Psoas muscle (tissue), 8 donors: ENCODE measurements at regions of chr16 and their contacts with region 1.

Region 1: DNA sequence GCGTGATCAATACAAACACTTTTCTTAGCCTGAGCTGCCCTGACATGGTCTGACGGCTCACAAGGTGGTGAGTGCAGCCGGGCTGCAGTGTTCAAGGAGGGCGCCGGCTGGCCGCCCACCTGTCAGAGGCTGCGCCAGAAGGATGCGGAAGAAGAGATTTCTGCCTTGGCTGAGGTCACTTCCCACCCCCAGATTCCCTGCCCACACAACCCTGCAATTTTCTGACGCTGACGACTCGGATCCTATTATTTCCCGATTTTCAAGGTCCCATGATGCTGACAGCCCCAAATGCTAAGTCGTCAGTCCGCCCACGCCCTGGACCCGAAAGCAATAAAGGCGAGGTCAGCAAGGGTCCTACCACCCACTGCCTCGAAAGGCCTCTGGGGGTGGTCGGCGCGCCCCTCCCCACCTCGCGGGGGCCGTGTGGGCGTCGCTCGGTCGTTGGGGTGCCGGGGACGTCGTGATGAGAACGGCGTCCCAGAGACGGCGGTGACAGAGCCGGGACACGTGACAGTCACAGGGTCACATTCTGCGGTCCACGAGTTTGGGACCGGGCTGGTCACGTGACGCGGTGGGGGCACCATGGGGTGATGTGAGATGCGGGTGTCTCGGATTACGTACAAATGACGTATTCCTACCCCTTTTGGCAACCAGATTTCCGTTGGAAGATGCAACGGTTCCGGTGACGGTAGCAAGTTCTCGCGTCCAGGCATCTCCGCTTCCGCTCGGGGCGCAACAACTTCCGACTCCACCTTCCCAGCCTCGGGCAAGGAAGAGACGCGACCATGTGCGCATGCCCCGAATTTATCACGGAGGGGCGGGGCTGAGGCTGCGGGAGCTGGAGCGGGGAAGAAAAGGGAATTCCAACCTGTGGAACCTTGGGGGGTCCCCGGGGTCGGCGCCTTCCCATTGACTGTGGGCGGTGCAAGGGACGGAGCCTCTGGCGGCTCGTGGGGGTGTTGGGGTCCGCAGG is at the start of gene STX4:
- DNase-seq: peak; percentile 98 to 99
- ATAC-seq: peak; percentile 91 to 96 (median 94)
- H3K4me3 ChIP-seq: peak within 1 kb of the TSS; percentile 85
- H3K27ac ChIP-seq: peak within 1 kb of the TSS; percentile 96
- H3K4me1 ChIP-seq: peaks cover 10% of the 10 kb centered on the region
- H3K27me3 ChIP-seq: no peaks in the 10 kb centered on the region
- CTCF ChIP-seq: no peak
- total RNA-seq, gene STX4: 47.6 to 57.8 (median 51.6) TPM

Region 2: DNA sequence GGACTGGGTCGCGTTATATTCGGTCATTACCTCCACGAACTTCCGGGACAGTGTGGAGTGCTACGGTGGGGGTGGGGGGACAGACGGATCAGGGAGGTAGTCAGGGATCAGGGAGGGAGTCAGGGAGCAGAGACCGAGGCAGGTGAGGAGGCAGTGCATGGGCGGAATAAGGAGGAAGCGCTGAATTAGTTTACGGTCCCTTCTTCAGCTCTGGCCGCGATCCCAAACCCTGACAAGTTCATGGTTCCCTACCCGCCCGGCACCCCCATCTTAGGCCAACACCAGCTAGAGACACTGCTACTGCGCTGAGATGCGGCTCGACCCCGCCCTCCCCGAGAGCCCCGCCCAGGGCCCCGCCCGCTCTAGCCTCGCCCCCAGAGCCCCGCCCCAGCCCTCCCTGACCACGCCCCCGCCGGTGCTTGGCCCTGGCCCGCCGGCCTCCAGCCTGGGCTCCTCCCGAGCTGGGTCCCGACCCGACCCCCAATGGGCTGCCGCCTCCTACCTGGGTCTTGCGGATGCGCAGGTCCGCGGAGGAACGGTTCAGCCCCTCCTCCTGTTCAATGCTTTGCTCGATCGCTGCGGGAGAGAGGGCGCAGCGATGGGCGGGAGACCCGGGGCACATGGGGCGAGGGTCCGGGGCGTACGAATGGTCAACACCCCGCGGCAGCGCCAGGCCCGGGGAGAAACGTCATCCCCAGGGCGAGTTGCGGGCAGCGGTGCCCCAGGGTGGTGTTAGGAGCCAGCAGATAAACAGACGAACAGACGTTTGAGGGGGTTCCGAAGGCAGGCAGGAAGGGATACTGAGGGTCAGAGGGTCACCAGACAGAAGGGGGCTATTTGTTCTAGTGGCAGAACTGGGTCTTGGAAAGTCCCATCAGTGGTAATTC is 35.8 kb before region 1 on chr16:
- intact Hi-C with region 1: loop called in 1 of 2 experiments (anchors 5 kb)
- DNase-seq: peak; percentile 88 to 91
- ATAC-seq: peak; percentile 94 to 98 (median 95)
- H3K4me3 ChIP-seq: peak overlapping the region; percentile 73
- H3K27ac ChIP-seq: peak overlapping the region; percentile 55
- H3K4me1 ChIP-seq: peaks cover 6% of the 10 kb centered on the region
- H3K27me3 ChIP-seq: no peaks in the 10 kb centered on the region
- CTCF ChIP-seq: no peak

Region 3: GRCh38 chr16:31016018-31016417 is 17.0 kb before region 1 on chr16:
- intact Hi-C with region 1: no loop called
- DNase-seq: no peak
- ATAC-seq: no peak
- H3K4me3 ChIP-seq: no peak overlapping the region
- H3K27ac ChIP-seq: no peak overlapping the region
- H3K4me1 ChIP-seq: no peaks in the 10 kb centered on the region
- H3K27me3 ChIP-seq: peaks cover 0 to 30% (median 23%) of the 10 kb centered on the region in 3 donors
- CTCF ChIP-seq: no peak

Region 4: GRCh38 chr16:31073968-31074813 is 41.2 kb after region 1 on chr16 and contains the starts of genes ZNF646 and ZNF668:
- intact Hi-C with region 1: loop called (anchors 2 kb)
- DNase-seq: peak; percentile 98 to 99
- ATAC-seq: peak; percentile 92 to 93 (median 92)
- H3K4me3 ChIP-seq: peak within 1 kb of the TSS; percentile 93
- H3K27ac ChIP-seq: peak within 1 kb of the TSS; percentile 97
- H3K4me1 ChIP-seq: peaks cover 20% of the 10 kb centered on the region
- H3K27me3 ChIP-seq: no peaks in the 10 kb centered on the region
- CTCF ChIP-seq: no peak
- total RNA-seq, gene ZNF646: 8.4 to 22.6 (median 12.3) TPM
- total RNA-seq, gene ZNF668: 5.3 to 7.5 (median 5.8) TPM